AG04449 (cell line): ENCODE measurements at regions of chr1 and their contacts with region 1.

Region 1: GRCh38 chr1:204162231-204163074 is 3.7 kb downstream of the REN start:
- DNase-seq: peak; percentile 12
- H3K4me3 ChIP-seq: no peak overlapping the region
- CTCF ChIP-seq: peak; percentile 98

Region 2: DNA sequence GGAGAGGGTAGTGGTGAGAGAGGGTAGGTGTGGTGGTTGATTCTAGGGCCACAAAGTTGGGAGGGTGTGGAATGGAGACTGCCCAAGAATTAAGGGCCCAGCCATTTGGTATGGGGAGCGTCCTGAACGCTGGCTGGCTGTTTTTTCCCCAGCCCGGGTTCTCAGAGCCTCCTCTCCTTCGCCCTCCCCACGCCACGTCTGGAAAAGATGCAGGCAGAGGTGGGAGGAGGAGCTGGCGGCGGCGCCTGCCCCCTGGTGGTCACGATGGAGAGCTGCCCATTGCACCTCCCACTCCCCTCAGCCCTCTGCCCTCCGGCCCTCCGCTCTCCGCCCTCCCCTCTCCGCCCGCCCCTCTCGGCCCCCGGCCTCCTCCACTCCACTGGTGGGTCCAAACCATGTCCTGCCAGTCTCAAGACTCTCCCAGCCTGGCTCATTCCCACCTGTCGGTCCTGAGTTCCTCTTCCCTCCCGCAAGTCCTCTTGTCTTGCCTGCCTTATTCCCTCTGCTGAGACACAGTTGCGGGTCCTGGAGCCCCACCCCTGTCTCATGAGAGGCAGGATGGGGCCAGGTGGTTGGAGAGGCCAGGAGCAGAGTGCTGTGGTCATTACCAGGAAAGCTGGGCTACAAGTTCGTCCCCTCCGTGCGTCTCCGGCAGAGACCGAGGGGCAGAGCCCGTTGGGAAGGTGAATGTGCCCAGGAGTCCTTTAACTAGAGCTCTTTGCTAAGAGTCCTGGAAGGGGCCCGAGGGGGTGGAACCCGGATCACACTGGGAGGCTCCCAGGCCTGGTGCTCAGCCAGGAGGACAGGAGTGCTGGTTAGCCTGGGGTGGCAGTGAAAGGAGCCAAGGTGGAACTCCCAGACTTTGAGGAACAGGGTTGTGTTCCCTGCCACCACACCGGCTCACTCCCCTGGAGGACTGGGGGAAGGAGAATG is 33.2 kb before region 1 on chr1:
- CTCF ChIA-PET with region 1: interaction called, 12 read pairs
- POLR2A ChIA-PET with region 1: no interaction called
- DNase-seq: no peak
- H3K4me3 ChIP-seq: no peak overlapping the region
- CTCF ChIP-seq: peak; percentile 96

Region 3: DNA sequence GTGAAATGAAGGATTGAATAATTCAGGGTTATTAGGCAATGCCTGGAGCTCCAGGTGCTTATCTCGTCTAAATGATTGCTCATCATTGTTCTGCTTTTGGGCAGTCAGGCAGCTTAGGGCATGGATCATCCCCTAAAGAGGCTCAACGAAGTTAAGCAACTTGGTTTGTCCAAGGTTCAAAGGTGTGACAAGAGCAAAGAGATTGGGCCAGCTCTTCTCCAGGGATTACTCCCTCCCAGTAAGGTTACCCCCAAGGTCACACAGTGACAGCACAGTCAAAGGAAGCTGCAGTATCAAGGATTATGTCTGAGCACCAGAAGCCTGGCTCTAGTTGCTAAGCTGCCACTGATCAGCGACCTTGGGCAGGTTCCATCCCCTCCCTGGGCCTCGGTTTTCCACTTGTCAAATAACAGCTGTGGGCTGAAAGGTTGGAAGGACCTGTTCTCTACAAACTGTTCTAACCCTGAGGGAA is 17.4 kb before region 1 on chr1:
- CTCF ChIA-PET with region 1: interaction called, 17 read pairs
- POLR2A ChIA-PET with region 1: no interaction called
- DNase-seq: no peak
- H3K4me3 ChIP-seq: no peak overlapping the region
- CTCF ChIP-seq: no peak

Region 4: GRCh38 chr1:204180133-204180532 is 17.7 kb after region 1 on chr1:
- CTCF ChIA-PET with region 1: interaction called, 83 read pairs
- POLR2A ChIA-PET with region 1: no interaction called
- DNase-seq: no peak
- H3K4me3 ChIP-seq: no peak overlapping the region
- CTCF ChIP-seq: no peak

Region 5: GRCh38 chr1:204213668-204214662 is 51.5 kb after region 1 on chr1 and contains the start of gene GOLT1A:
- CTCF ChIA-PET with region 1: interaction called, 67 read pairs
- POLR2A ChIA-PET with region 1: no interaction called
- DNase-seq: peak; percentile 59
- H3K4me3 ChIP-seq: peak within 1 kb of the TSS; percentile 8
- CTCF ChIP-seq: peak; percentile 75

Region 6: DNA sequence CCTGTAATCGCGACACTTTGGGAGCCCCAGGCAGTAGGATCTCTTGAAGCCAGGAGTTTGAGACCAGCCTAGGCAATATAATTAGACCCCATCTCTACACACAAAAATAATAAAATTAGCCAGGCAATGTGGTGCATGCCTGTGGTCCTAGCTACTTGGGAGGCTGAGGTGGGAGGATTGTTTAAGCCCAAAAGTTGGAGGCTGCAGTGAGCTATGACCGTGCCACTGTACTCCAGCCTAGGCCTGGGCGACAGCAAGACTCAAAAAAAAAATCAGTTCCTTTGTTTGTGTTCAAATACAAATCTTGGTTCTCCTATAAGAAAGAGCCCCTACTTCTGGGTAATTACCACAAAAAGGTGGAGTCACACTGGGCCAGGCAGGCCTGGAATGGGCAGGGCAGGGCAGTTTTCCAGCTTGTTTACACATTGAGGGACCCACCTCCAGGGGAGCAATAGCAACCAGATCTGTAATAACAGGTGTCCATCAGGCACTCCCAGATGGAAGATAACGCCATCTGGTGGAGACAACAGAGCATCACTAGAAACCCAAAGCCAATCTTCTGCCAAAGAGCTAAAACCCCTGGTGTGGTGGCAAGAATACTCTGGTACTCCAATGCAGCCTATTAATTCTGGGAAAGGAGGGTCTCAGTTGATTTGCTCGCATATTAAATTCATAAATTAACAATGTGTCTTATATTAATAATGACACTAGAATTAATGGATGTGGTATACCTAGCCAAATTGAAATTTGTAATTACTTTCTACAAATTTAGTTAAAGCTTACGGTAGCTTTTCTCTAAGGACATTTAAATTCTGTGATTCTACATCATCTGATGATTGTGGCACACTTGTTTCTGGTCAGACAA is 236.0 kb after region 1 on chr1:
- CTCF ChIA-PET with region 1: interaction called, 96 read pairs
- POLR2A ChIA-PET with region 1: no interaction called
- DNase-seq: no peak
- H3K4me3 ChIP-seq: no peak overlapping the region
- CTCF ChIP-seq: peak; percentile 74

Region 7: GRCh38 chr1:204506961-204507387 is 344.5 kb after region 1 on chr1:
- CTCF ChIA-PET with region 1: interaction called, 12 read pairs
- POLR2A ChIA-PET with region 1: no interaction called
- DNase-seq: peak; percentile 79
- H3K4me3 ChIP-seq: peak overlapping the region; percentile 55
- CTCF ChIP-seq: no peak

Region 8: GRCh38 chr1:204685236-204686006 is 523.0 kb after region 1 on chr1 and contains the start of gene LRRN2:
- CTCF ChIA-PET with region 1: no interaction called
- POLR2A ChIA-PET with region 1: no interaction called
- DNase-seq: no peak
- H3K4me3 ChIP-seq: no peak within 1 kb of the TSS
- CTCF ChIP-seq: no peak